Motor neuron (in vitro differentiated cells): ENCODE measurements at regions of chr12 and their contacts with region 1.

Region 1: DNA sequence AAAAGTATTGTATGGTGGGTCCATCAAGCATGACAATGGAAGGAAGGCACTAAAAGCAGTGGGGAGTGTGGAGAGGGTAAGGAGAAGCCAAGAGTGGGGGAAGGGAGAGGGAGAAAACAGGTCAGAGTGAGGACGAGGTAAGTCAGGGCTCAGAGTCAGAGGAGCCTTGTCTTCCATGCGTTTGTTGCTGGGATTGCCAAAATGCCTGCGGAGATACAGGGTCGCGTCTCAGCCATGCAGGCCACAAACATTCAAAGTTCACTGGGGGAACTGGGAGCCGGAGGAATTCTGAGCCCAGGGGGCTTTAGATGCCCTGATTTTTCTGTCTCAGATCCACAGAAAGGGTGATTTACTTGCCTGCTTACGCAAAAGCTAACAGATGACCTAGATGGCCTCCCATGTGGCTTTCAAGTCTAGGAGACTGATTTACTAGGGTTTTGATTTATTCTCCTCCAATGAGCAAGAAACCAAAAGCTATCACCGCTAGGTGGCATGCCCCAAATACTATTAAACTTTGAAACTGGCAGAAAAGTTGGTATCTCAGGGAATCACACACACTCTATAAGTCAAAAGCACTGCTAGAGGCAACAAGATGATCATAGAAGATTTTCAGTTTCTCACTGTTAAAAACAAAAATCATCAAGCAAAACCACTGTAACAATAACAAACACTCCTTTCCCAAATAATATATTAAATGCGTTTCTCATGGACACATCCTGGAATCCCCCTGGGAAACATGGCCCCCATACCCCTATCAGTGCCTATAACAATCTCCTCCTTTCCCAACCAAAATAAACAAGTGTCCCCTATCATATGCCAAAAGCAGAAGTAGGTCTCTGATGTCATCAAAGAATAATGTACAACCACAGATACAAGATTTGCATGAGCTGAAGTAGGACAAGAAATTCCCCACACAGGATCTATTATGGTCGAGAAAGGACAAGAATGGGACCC is 26.6 kb upstream of the MDM1 start:
- ATAC-seq: peak in 7 of 8 experiments; percentile 15 to 90 (median 44)
- H3K4me3 ChIP-seq: no peak overlapping the region
- H3K27ac ChIP-seq: no peak overlapping the region
- H3K4me1 ChIP-seq: peaks cover 16 to 22% of the 10 kb centered on the region in 2 donors

Region 2: DNA sequence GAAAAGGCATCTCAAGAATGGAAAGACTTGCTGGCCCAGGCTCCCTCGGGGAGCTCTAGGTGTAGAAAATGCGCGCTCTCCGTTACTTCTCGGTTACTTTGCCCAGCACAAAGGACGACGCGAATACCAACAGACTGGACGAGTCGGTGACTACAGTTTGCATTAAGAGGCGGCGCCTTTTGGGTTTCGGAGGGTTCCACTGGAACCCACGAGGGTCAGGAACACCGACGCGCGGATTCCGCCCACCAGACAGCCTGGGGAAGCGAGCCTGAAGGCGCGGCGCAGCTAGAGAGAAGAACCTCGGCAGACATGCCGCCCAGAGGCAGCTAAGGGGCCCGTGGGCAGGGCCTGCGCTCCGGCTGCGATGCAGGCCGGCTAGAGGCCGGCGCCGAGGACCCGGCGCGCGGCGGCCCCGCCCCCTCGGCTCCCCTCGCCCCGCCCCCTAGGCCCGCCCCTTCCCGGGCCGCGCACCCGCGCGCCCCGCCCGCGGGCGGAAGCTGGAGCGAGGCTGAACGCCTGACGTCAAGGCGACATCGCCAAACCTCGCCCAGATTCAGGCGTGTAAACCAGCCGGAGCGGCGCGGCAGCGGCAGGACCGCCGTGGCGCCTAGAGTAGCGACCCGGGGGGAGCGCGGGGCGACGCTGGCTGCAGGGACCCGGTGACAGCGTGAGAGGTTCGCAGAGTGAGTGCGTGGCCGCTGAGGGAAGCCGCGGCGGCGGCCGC is 251.7 kb after region 1 on chr12 and contains the start of gene RAP1B:
- in situ Hi-C with region 1: loop called in 2 of 9 experiments (anchors 25 kb)
- ATAC-seq: peak; percentile 82 to 93 (median 92)
- H3K4me3 ChIP-seq: peak within 1 kb of the TSS; percentile 73 to 100 (median 94)
- H3K27ac ChIP-seq: peak within 1 kb of the TSS; percentile 94 to 97
- H3K4me1 ChIP-seq: peaks cover 7 to 23% of the 10 kb centered on the region in 2 donors
- total RNA-seq, gene RAP1B: 58.6 to 203 (median 99.0) TPM